ENCODE measurements at regions of chrX and their contacts with region 1.

Region 1: GRCh38 chrX:9241427-9241826 is 207.5 kb upstream of the FAM9B start:
- DNase-seq: no peak
- ATAC-seq: no peak

Region 2: GRCh38 chrX:10926891-10927290 is 1685.5 kb after region 1 on chrX:
- intact Hi-C with region 1: loop called (anchors 5 kb)
- DNase-seq: no peak
- ATAC-seq: no peak